Activated T-helper 1 cell treated with anti-CD3 and anti-CD28 coated beads, Interleukin-12 subunit alpha, Interleukin-12 subunit beta, Interleukin-2, Interleukin-4 antibody, amounts not matched to agents 30 ng/mL and 10 ng/mL and 1 ng/mL, durations not matched to agents 14 hours and 24 hours and 36 hours (primary cell): ENCODE measurements at regions of chr4 and their contacts with region 1.

Region 1: DNA sequence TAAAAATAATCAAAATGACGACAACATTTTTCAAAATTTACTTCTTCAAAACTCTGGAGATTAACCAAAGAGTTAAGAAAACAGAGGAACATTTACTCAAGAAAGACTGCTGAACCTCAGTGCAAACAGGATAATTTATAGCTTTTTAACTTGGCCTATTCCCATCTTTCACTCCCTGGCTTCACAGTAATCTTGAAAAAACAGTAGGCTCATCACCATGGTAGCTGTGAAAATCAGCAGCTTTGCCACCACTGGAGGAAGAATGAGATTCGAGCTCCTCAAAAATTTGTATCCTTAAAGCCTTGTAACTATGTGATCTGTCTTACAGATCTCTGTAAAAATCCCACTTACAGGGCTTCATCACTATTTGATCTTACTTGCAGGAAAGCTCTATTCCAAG is 447.7 kb upstream of the CTSO start:
- DNase-seq: no peak
- H3K4me3 Mint-ChIP-seq: no peak overlapping the region
- H3K27ac Mint-ChIP-seq: no peak overlapping the region
- H3K4me1 Mint-ChIP-seq: no peaks in the 10 kb centered on the region
- H3K27me3 Mint-ChIP-seq: no peaks in the 10 kb centered on the region

Region 2: DNA sequence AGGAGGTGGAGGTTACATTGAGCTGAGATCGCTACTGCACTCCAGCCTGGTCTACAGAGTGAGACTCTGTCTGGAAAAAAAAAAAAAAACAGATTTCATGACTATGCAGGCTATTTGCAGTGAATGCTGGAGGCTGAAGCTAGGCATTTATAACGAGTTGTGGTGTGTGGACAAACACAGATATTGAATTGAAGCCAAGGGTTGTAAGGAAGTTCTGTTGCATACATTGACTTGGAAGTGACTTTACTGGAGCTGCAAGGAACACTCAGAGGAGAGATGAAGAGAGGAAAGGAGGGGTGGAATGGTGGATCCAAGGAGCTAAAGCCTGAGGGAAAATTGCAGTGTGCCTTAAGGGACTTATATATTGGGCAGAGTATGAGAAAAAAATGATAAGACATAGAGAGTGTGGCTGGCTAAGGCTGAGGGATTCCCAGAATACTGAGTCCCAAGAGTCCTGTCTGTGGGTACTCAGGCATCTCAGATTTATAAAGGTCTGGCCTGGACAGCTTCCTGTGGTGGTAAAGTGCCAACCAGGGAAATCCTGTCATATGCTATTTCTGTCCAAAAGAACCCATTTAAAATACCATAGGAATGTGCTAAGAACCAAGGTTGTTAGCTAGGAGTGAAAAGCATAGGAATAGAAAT is 822.5 kb before region 1 on chr4:
- intact Hi-C with region 1: no loop called
- DNase-seq: no peak
- H3K4me3 Mint-ChIP-seq: no peak overlapping the region
- H3K27ac Mint-ChIP-seq: no peak overlapping the region
- H3K4me1 Mint-ChIP-seq: peaks cover 12% of the 10 kb centered on the region
- H3K27me3 Mint-ChIP-seq: no peaks in the 10 kb centered on the region

Region 3: GRCh38 chr4:156390599-156391324 is 10.6 kb before region 1 on chr4:
- intact Hi-C with region 1: loop called (anchors 1 kb)
- DNase-seq: no peak
- H3K4me3 Mint-ChIP-seq: no peak overlapping the region
- H3K27ac Mint-ChIP-seq: no peak overlapping the region
- H3K4me1 Mint-ChIP-seq: no peaks in the 10 kb centered on the region
- H3K27me3 Mint-ChIP-seq: no peaks in the 10 kb centered on the region

Region 4: GRCh38 chr4:156420623-156421022 is 19.3 kb after region 1 on chr4:
- intact Hi-C with region 1: no loop called
- DNase-seq: no peak
- H3K4me3 Mint-ChIP-seq: no peak overlapping the region
- H3K27ac Mint-ChIP-seq: no peak overlapping the region
- H3K4me1 Mint-ChIP-seq: no peaks in the 10 kb centered on the region
- H3K27me3 Mint-ChIP-seq: no peaks in the 10 kb centered on the region